Right cardiac atrium (tissue), 5 donors: ENCODE measurements at regions of chr15 and their contacts with region 1.

Region 1: DNA sequence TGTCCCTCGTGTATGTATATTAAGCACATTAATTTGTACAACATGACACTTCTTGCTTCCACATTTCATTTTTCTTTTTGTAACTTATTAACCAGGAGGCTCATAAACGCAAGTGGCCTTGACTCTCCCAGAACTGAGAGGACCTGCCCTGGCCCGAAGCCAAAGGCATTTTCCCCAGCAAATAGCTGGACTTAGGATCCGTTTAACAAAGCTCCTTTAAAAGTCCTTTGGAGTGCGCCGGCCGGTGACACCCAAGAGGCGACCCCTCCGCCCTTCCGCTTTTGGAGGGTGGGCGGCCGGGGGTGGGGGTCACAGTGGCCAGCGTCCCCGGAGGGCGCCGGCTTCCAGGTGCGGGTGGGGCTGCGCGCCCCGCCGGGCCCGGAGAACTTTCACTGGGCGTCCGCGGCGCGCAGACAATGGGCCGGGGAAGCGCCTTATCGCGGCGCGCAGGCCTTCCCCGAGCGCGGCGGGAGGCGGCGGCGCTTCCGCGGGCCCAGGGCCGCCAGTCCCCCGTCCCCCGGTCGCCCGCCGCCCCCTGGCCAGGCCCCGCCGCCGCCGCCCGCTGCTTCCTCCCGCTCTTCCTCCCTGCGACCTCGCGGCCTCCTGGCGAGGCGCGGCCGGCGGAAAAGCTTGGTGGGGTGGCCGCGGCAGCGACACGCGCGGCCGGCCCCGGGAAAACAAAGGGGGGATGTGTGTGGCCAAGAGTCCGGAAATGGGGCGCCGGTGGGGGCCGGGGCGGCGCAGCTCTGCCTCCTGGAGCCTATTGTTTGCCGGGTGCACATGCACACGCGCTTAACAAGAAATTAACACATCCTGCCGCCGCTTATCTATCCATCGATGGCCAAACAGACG is 613.4 kb downstream of the MCTP2 start:
- DNase-seq: peak; percentile 84 to 91 (median 89)
- ATAC-seq: peak; percentile 93 to 97
- H3K4me3 ChIP-seq: peak overlapping the region; percentile 70
- H3K27ac ChIP-seq: peak overlapping the region; percentile 48
- H3K4me1 ChIP-seq: peaks cover 1% of the 10 kb centered on the region
- H3K27me3 ChIP-seq: no peaks in the 10 kb centered on the region

Region 2: GRCh38 chr15:94670438-94671034 is 174.2 kb before region 1 on chr15:
- intact Hi-C with region 1: loop called in 1 of 4 experiments (anchors 10 kb)
- DNase-seq: no peak
- ATAC-seq: peak in 1 of 2 donors; percentile 61
- H3K4me3 ChIP-seq: no peak overlapping the region
- H3K27ac ChIP-seq: no peak overlapping the region
- H3K4me1 ChIP-seq: no peaks in the 10 kb centered on the region
- H3K27me3 ChIP-seq: no peaks in the 10 kb centered on the region

Region 3: GRCh38 chr15:95018888-95019545 is 174.3 kb after region 1 on chr15:
- intact Hi-C with region 1: loop called in 1 of 4 experiments (anchors 5 kb)
- DNase-seq: no peak
- ATAC-seq: peak; percentile 53 to 84
- H3K4me3 ChIP-seq: no peak overlapping the region
- H3K27ac ChIP-seq: peak overlapping the region; percentile 43
- H3K4me1 ChIP-seq: no peaks in the 10 kb centered on the region
- H3K27me3 ChIP-seq: no peaks in the 10 kb centered on the region